HCT116 (cell line): ENCODE measurements at regions of chr10 and their contacts with region 1.

Region 1: DNA sequence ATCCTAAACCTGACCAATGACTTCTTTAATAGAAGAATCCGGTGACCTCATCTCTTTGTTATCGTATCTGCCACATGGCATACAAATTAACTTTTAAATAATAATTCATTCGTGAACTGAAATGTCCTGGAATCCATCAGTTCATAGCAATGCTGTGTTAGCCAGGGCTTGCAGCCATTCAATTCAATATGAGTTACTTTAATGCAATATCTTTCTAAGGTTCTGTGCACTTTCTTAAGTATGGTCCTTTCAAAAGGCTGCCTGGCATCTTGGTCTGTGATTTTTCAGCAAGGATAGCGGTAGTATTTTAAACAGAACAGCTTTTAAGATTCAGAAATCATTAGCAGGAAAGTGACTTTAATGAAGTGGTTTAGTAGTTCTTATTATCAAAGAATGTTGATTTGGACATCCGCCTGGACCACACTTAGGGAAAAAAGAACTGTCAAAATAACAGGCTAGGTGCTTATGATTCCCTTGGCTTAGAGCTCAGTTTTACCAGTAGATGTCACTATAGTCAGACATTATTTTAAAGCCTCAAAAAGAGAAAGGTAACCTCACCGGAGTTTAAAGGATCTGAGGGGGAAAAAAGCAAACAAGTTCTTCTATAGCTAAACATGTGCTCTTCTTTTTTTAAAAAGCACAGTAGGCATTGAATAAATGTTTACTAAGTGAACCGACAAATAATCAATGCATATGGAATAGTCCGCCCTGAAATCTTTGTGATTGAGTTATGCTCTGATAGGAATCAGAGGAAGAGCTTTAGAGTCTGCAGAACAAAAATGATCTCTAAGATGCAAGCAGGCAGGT is 22.7 kb downstream of the SLC35G1 start:
- DNase-seq: peak; percentile 22
- ATAC-seq: peak; percentile 78
- H3K4me3 ChIP-seq: no peak overlapping the region
- H3K27ac ChIP-seq: no peak overlapping the region
- H3K4me1 ChIP-seq: no peaks in the 10 kb centered on the region
- H3K27me3 ChIP-seq: no peaks in the 10 kb centered on the region
- CTCF ChIP-seq: peak; percentile 51 to 68 (median 60); a peak in 5 of 6 replicates
- POLR2A ChIP-seq: no peak
- RAD21 ChIP-seq: peak; percentile 70

Region 2: DNA sequence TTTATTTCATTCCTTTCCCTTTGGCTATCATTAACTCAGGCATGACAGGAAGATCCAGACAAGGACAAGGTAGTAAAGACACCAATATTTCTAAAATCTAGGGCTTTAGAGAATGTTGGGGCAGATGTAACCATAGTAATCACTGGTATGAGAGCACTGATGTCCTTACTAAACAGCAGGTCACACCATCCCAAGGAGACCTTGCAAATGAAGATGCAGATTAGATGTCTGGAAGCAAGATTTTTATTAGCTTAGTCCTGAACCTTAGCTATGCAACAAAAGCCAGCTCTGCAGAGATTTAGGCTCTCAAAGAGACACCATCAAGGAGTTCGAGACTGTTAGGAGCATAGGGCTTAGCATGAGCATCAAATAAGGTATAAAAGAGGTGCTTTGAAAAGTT is 190.4 kb before region 1 on chr10:
- CTCF ChIA-PET with region 1: no interaction called
- POLR2A ChIA-PET with region 1: no interaction called
- RAD21 ChIA-PET with region 1: no interaction called
- intact Hi-C with region 1: no loop called
- DNase-seq: no peak
- ATAC-seq: no peak
- H3K4me3 ChIP-seq: no peak overlapping the region
- H3K27ac ChIP-seq: no peak overlapping the region
- H3K4me1 ChIP-seq: no peaks in the 10 kb centered on the region
- H3K27me3 ChIP-seq: peaks cover 21% of the 10 kb centered on the region
- CTCF ChIP-seq: no peak
- POLR2A ChIP-seq: no peak
- RAD21 ChIP-seq: no peak

Region 3: DNA sequence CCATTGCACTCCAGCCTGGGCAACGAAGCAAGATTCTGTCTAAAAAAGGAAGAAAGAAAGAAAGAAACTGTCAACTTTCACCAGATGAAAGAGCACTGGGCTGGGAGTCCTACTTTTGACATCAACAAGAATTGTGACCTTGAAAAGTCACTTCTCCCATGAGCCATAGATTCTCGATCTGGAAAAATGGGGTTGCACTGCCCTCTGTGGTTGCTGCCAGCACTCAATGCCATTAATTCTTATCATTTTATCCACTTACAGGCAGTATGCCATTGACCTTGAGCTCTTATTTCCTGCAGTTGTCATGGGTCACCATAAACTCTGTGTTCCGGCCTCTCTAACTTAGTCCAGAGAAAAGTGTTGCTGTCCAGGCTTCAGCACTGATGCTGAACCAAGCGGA is 309.1 kb after region 1 on chr10:
- CTCF ChIA-PET with region 1: interaction called, 15 read pairs
- POLR2A ChIA-PET with region 1: no interaction called
- RAD21 ChIA-PET with region 1: interaction called in 1 of 2 experiments, 3 read pairs
- intact Hi-C with region 1: loop called (anchors 1 kb)
- DNase-seq: no peak
- ATAC-seq: peak; percentile 63
- H3K4me3 ChIP-seq: no peak overlapping the region
- H3K27ac ChIP-seq: no peak overlapping the region
- H3K4me1 ChIP-seq: no peaks in the 10 kb centered on the region
- H3K27me3 ChIP-seq: no peaks in the 10 kb centered on the region
- CTCF ChIP-seq: peak; percentile 17 to 38 (median 27); a peak in 3 of 6 replicates
- POLR2A ChIP-seq: no peak
- RAD21 ChIP-seq: peak; percentile 59